CD8-positive, alpha-beta T cell (primary cell): ENCODE measurements at regions of chr12 and their contacts with region 1.

Region 1: GRCh38 chr12:121668750-121669520 is 519 bp downstream of the MORN3 start:
- DNase-seq: peak in 8 of 9 experiments; percentile 45 to 77 (median 72)
- ATAC-seq: no peak
- H3K4me3 ChIP-seq: no peak overlapping the region
- H3K4me3 Mint-ChIP-seq: peak overlapping the region; percentile 37
- H3K27ac ChIP-seq: peak overlapping the region in 1 of 2 experiments; percentile 0
- H3K27ac Mint-ChIP-seq: peak overlapping the region; percentile 88
- H3K4me1 ChIP-seq: peaks cover 60% of the 10 kb centered on the region
- H3K4me1 Mint-ChIP-seq: peaks cover 61% of the 10 kb centered on the region
- H3K27me3 ChIP-seq: no peaks in the 10 kb centered on the region
- H3K27me3 Mint-ChIP-seq: no peaks in the 10 kb centered on the region
- CTCF ChIP-seq: peak; percentile 75

Region 2: DNA sequence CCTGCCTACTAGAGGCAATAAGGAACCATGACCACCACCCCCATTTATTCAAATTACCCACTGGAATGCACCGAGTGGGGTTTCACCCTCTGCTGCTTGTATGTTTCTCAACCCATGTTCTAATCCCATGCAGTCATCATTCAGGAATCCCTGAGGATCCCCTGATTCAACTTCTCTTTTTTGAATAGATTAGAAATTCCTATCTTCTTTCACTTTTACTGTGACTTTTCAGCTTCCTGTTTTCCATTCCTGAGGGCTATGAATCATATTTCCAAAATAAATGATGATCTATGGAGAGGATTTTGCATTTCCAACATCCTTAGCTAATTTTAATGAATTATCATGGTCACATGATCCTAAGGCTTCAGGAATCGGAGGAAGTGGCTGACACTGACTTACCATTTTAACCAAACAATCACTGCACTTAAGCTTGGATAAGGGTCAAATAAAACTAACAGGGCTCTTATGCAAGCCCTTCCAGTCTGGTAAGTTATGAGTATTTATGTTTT is 478.4 kb before region 1 on chr12:
- CTCF ChIA-PET with region 1: no interaction called
- POLR2A ChIA-PET with region 1: no interaction called
- intact Hi-C with region 1: no loop called
- DNase-seq: peak in 1 of 9 experiments; percentile 33
- ATAC-seq: no peak
- H3K4me3 ChIP-seq: no peak overlapping the region
- H3K4me3 Mint-ChIP-seq: no peak overlapping the region
- H3K27ac ChIP-seq: no peak overlapping the region
- H3K27ac Mint-ChIP-seq: no peak overlapping the region
- H3K4me1 ChIP-seq: no peaks in the 10 kb centered on the region
- H3K4me1 Mint-ChIP-seq: no peaks in the 10 kb centered on the region
- H3K27me3 ChIP-seq: no peaks in the 10 kb centered on the region
- H3K27me3 Mint-ChIP-seq: no peaks in the 10 kb centered on the region
- CTCF ChIP-seq: no peak

Region 3: DNA sequence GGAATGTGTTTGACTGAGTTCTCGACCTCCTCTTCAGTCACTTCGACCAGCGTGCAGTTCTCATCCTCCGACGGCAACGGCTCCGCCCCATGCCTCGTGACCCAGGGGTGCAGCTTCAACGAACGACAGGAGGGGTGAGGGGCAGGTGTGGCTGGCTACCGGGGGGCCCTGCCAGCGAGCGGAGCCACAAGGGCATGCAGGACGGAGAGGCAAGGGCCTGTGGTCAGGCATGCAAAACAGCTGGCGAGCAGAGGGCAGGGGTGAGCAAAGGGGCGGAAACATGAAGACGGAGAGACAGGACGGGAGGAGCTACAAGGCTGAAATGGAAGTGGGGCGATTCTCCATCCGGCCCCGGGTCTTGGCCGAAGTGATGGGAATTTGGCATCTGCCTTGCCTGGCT is 420.3 kb before region 1 on chr12:
- CTCF ChIA-PET with region 1: no interaction called
- POLR2A ChIA-PET with region 1: no interaction called
- intact Hi-C with region 1: no loop called
- DNase-seq: no peak
- ATAC-seq: no peak
- H3K4me3 ChIP-seq: no peak overlapping the region
- H3K4me3 Mint-ChIP-seq: no peak overlapping the region
- H3K27ac ChIP-seq: no peak overlapping the region
- H3K27ac Mint-ChIP-seq: no peak overlapping the region
- H3K4me1 ChIP-seq: no peaks in the 10 kb centered on the region
- H3K4me1 Mint-ChIP-seq: peaks cover under 1% of the 10 kb centered on the region
- H3K27me3 ChIP-seq: no peaks in the 10 kb centered on the region
- H3K27me3 Mint-ChIP-seq: no peaks in the 10 kb centered on the region
- CTCF ChIP-seq: no peak

Region 4: GRCh38 chr12:121467115-121467793 is 201.7 kb before region 1 on chr12:
- CTCF ChIA-PET with region 1: no interaction called
- POLR2A ChIA-PET with region 1: no interaction called
- intact Hi-C with region 1: loop called in 1 of 2 experiments (anchors 2 kb)
- DNase-seq: peak; percentile 77 to 94 (median 86)
- ATAC-seq: peak; percentile 85
- H3K4me3 ChIP-seq: peak overlapping the region; percentile 49 to 55
- H3K4me3 Mint-ChIP-seq: peak overlapping the region; percentile 68
- H3K27ac ChIP-seq: peak overlapping the region; percentile 44 to 59
- H3K27ac Mint-ChIP-seq: no peak overlapping the region
- H3K4me1 ChIP-seq: peaks cover 26% of the 10 kb centered on the region
- H3K4me1 Mint-ChIP-seq: peaks cover 37% of the 10 kb centered on the region
- H3K27me3 ChIP-seq: no peaks in the 10 kb centered on the region
- H3K27me3 Mint-ChIP-seq: no peaks in the 10 kb centered on the region
- CTCF ChIP-seq: no peak

Region 5: GRCh38 chr12:121499929-121500793 is 168.8 kb before region 1 on chr12:
- CTCF ChIA-PET with region 1: interaction called, 85 read pairs
- POLR2A ChIA-PET with region 1: interaction called, 4 read pairs
- intact Hi-C with region 1: loop called in 1 of 2 experiments (anchors 1 kb)
- DNase-seq: peak; percentile 55 to 88 (median 76)
- ATAC-seq: peak; percentile 80
- H3K4me3 ChIP-seq: no peak overlapping the region
- H3K4me3 Mint-ChIP-seq: no peak overlapping the region
- H3K27ac ChIP-seq: no peak overlapping the region
- H3K27ac Mint-ChIP-seq: no peak overlapping the region
- H3K4me1 ChIP-seq: peaks cover 13% of the 10 kb centered on the region
- H3K4me1 Mint-ChIP-seq: peaks cover 12% of the 10 kb centered on the region
- H3K27me3 ChIP-seq: no peaks in the 10 kb centered on the region
- H3K27me3 Mint-ChIP-seq: no peaks in the 10 kb centered on the region
- CTCF ChIP-seq: peak; percentile 97

Region 6: DNA sequence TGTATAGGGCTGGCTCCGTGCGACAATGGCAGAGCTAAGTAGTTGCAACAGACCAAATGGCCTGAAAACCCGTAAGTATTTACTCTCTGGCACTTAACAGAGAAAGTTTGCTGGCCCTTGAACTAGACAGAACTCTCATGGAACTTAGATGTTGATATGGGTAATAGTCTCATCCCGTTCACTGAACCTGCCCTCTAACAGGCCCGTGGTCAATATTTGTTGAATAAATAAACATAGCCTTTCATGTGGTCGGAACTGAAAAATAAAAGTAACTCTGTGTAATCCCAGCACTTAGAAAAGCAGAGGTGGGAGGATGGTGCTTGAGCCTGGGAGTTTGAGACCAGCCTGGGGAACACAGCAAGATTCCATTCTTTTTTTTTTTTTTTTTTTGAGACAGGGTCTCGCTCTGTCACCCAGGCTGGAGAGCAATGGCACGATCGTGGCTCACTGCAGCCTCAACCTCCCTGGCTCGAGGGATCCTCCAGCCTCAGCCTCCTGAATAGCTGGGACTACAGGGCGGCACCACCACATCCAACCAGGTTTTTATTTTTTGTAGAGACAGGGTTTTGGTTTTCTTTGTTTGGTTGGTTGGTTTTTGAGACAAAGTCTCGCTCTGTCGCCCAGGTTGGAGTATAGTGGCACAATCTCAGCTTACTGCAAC is 117.8 kb before region 1 on chr12:
- CTCF ChIA-PET with region 1: interaction called, 87 read pairs
- POLR2A ChIA-PET with region 1: interaction called, 12 read pairs
- intact Hi-C with region 1: loop called (anchors 1 kb)
- DNase-seq: no peak
- ATAC-seq: no peak
- H3K4me3 ChIP-seq: no peak overlapping the region
- H3K4me3 Mint-ChIP-seq: no peak overlapping the region
- H3K27ac ChIP-seq: peak overlapping the region in 1 of 2 experiments; percentile 71
- H3K27ac Mint-ChIP-seq: peak overlapping the region; percentile 85
- H3K4me1 ChIP-seq: no peaks in the 10 kb centered on the region
- H3K4me1 Mint-ChIP-seq: peaks cover 6% of the 10 kb centered on the region
- H3K27me3 ChIP-seq: no peaks in the 10 kb centered on the region
- H3K27me3 Mint-ChIP-seq: no peaks in the 10 kb centered on the region
- CTCF ChIP-seq: no peak

Region 7: DNA sequence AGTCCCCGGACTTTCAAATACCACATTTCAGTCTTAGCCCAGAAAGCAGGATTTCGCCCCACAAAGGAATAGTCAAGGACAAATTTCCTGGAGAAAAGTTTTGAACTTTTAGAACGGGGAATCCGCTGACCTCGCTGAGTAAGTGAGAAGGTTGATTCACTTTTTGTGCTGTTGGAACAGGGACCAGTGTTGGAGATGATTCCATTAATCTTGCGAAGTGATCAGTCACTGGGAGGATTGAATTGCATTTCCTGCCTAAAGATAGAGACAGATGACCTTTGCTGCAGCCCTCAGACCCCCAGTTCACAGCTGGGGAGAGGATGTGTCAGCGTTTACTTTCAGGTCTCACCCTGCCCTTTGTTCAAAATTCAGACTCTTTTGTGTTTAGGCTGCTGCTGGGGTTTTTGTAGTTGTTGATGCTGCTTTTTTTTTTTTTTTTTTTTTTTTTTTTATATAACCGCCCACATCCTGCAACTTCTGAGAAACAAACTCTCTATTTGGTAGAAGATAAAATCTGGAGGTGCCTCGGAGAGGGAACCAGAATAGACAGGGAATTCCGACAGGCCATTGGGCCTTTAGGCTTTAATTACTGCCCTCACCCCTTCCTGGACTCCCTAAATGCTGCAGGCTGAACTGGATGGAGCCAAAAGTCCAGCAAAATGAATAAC is 78.3 kb before region 1 on chr12:
- CTCF ChIA-PET with region 1: interaction called, 8 read pairs
- POLR2A ChIA-PET with region 1: interaction called, 4 read pairs
- intact Hi-C with region 1: loop called in 1 of 2 experiments (anchors 1 kb)
- DNase-seq: peak in 8 of 9 experiments; percentile 37 to 92 (median 75)
- ATAC-seq: peak; percentile 75
- H3K4me3 ChIP-seq: peak overlapping the region; percentile 44 to 57
- H3K4me3 Mint-ChIP-seq: peak overlapping the region; percentile 89
- H3K27ac ChIP-seq: peak overlapping the region; percentile 95 to 96
- H3K27ac Mint-ChIP-seq: peak overlapping the region; percentile 100
- H3K4me1 ChIP-seq: peaks cover 30% of the 10 kb centered on the region
- H3K4me1 Mint-ChIP-seq: peaks cover 33% of the 10 kb centered on the region
- H3K27me3 ChIP-seq: no peaks in the 10 kb centered on the region
- H3K27me3 Mint-ChIP-seq: no peaks in the 10 kb centered on the region
- CTCF ChIP-seq: no peak

Region 8: GRCh38 chr12:121657305-121658008 is 11.5 kb before region 1 on chr12:
- CTCF ChIA-PET with region 1: interaction called, 39 read pairs
- POLR2A ChIA-PET with region 1: interaction called, 18 read pairs
- intact Hi-C with region 1: loop called in 1 of 2 experiments (anchors 2 kb)
- DNase-seq: no peak
- ATAC-seq: no peak
- H3K4me3 ChIP-seq: no peak overlapping the region
- H3K4me3 Mint-ChIP-seq: no peak overlapping the region
- H3K27ac ChIP-seq: peak overlapping the region in 1 of 2 experiments; percentile 19
- H3K27ac Mint-ChIP-seq: peak overlapping the region; percentile 97
- H3K4me1 ChIP-seq: peaks cover 43% of the 10 kb centered on the region
- H3K4me1 Mint-ChIP-seq: peaks cover 66% of the 10 kb centered on the region
- H3K27me3 ChIP-seq: no peaks in the 10 kb centered on the region
- H3K27me3 Mint-ChIP-seq: no peaks in the 10 kb centered on the region
- CTCF ChIP-seq: no peak

Region 9: DNA sequence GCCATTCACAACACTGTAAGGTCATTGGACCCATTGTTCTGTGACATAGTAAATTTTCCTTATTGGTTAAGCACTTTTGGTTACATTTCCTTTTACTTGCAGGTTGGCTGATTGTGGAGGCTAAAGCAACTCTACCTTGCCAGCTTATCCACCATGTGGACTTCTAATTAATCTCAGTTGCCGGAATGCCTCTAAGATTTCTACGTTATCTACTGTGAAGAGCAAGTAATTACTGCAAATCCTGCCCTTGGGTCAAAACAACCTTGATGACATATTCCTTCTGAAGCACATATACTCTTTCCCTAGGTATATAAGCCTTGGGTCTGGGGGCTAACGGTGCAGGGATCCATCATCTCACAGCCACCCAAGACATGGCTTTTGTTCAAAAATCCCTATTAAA is 20.0 kb after region 1 on chr12:
- CTCF ChIA-PET with region 1: interaction called, 4 read pairs
- POLR2A ChIA-PET with region 1: interaction called, 6 read pairs
- intact Hi-C with region 1: loop called in 1 of 2 experiments (anchors 1 kb)
- DNase-seq: no peak
- ATAC-seq: no peak
- H3K4me3 ChIP-seq: no peak overlapping the region
- H3K4me3 Mint-ChIP-seq: no peak overlapping the region
- H3K27ac ChIP-seq: no peak overlapping the region
- H3K27ac Mint-ChIP-seq: no peak overlapping the region
- H3K4me1 ChIP-seq: peaks cover 5% of the 10 kb centered on the region
- H3K4me1 Mint-ChIP-seq: peaks cover 8% of the 10 kb centered on the region
- H3K27me3 ChIP-seq: no peaks in the 10 kb centered on the region
- H3K27me3 Mint-ChIP-seq: no peaks in the 10 kb centered on the region
- CTCF ChIP-seq: no peak